ENCODE measurements at regions of chr3 and their contacts with region 1.

Region 1: GRCh38 chr3:23916886-23917678 is at the starts of genes NKIRAS1 and RPL15:
- DNase-seq: peak; percentile 97
- CTCF ChIP-seq: peak; percentile 20

Region 2: GRCh38 chr3:23945903-23946751 is 29.0 kb after region 1 on chr3:
- CTCF ChIA-PET with region 1: interaction called, 4 read pairs
- POLR2A ChIA-PET with region 1: interaction called, 11 read pairs
- DNase-seq: peak; percentile 95
- CTCF ChIP-seq: no peak

Measured in GM10248 (cell line).